Posterior cingulate gyrus (tissue), 11 donors: ENCODE measurements at regions of chr2 and their contacts with region 1.

Region 1: DNA sequence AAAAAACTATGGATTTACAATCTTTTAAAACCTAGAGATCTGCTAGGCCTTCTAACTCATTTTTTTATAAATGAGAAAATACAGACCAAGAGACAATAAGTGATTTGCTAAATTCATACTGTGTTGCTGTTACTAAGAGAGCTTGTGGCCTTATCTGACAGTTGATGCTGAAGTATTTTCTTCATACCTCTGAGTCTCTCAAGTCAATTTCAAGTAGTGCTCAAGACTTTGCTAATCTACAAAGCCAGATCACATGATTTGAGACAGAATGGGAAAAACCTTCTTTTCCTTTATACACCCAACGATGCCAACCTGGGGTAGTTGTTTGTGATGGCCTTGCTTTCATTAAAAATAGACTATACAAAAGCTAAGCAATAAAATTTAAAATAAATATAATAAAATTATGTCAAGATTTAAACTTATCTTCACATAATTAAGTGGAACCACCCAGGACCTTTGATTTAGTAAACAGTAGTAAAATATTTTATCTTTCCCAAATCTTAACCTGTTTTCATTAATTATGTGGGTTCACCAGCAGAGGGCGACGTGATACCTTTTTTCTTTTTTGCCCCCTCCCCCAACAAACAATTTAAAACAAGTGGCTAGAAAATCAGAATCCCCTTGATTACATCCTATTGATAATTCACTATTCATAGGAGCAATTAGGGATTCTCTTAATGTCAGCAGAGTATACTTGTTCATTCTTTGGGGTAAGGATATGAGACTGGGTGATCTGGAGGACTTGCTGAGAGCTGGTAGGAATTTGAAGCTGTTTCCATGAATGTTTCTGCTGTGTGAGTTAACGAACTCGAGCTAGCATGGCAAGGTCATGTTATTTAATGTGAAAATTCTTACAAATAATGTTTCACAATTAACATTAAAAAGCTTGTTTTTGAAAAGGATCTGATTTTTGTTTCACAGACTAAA is 49.6 kb upstream of the SLC5A7 start:
- DNase-seq: peak in 2 of 10 donors; percentile 4 to 18

Region 2: GRCh38 chr2:106638043-106638442 is 1298.7 kb before region 1 on chr2:
- intact Hi-C with region 1: loop called (anchors 5 kb)
- DNase-seq: no peak

Region 3: DNA sequence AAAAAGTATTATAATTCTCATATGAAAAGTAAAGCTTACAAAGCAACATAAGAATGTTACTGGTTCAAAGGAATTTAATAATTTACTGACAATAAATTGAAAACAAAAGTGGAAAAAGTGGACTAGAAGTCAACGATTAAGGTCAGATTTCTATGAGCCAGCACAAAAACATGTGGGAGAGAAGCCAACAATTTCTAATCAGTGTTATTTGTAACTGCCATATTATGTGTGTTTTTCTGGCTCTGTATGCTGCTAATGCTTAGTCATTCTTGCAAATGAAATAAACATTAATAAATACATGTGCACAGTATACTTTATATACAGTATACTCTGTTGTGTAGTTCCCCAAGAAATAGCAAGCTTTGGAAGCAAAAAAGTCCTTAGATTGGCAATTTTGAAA is 411.3 kb before region 1 on chr2:
- intact Hi-C with region 1: no loop called
- DNase-seq: no peak

Region 4: DNA sequence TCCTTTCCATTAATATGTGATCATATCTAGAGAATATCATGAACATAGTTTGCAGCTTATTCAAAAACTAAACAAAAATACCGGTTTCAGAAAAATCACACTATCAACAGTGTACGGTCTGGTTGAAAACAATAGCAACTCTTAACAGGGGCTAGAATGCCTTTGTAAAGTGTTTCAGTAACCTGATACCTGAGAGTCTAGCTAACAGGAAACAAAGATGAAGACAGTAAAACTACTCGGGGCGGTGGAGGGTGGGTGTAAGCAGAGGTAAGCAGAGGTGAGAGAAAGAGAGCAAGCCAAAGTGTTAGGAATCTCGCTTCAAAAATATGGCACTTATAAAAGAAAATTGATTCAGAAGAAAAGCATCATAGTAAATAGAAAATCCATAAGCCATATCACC is 219.0 kb before region 1 on chr2:
- intact Hi-C with region 1: no loop called
- DNase-seq: no peak

Region 5: DNA sequence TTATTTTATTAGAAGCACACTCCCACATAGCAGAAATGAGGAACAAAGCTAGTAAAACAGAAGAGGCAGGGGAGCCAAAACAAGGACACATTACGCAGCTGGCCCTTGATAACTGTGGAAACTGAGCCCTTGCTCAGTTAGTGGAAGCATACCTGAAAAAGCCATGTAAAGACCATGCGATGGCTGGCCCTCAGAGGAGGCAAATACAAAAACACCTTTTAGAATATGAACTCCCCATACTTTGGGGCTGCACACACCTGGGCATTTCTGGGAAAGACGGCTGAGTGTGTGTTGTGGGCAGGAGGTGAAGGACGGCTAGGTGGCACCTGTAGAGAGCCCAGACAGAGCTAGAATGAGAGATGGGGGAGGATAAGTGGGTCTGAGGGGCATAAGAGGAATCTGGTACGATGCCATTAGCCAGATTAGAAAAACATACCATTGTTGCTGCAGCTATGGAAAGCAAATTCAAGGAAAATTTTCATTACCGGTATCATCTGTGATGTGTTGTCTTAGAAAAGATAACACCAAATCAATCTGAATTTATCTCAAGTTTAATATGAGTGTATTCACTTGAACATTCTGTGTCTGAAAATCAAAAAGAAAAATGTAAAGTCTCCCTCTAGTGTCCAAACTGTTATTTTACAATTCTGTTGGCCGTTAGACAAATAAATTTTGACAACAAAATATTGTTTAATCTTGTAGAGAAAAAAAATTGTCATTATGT is 257.9 kb after region 1 on chr2:
- intact Hi-C with region 1: loop called (anchors 5 kb)
- DNase-seq: no peak